ENCODE measurements at regions of chr21 and their contacts with region 1.

Region 1: GRCh38 chr21:32757804-32758203 is 13.8 kb downstream of the PAXBP1 start:
- DNase-seq: no peak
- ATAC-seq: no peak
- H3K4me3 ChIP-seq: no peak overlapping the region
- H3K27ac ChIP-seq: no peak overlapping the region
- H3K4me1 ChIP-seq: no peaks in the 10 kb centered on the region
- CTCF ChIP-seq: no peak
- EP300 ChIP-seq: no peak
- POLR2A ChIP-seq: no peak
- RAD21 ChIP-seq: no peak

Region 2: DNA sequence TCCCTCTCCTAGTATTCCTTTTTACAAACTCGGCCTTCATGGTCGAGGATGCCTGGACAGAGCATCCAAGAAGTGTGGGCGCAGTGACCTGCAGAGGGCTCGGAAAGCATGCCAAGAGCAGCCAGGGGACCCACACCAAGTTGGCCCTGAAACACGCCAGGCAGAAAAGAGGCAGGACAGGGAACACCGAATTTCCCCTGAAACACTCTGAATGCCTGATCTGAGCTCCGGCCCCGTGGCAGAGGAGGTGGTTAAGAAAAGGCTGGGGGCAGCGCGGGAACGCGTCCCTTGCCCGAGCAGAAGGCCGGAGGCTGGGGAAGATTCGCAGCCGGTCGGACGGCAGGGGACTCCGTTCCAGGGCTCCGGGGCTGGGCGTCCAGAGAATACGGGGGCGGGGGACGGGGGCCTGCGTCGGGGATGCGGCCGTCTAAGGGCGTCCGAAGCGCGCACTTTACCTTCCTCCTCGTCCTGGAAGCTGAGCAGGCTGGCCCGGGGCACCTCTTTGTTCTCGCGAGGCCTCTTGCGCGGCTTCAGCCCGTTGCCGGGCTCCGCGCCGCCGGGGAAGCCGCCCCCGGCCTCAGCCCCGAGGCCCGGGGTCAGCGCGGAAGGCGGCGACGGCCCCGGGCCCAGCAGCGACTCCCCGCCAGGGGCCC is 13.2 kb after region 1 on chr21:
- CTCF ChIA-PET with region 1: interaction called, 10 read pairs
- POLR2A ChIA-PET with region 1: interaction called, 4 read pairs
- DNase-seq: peak; percentile 20 to 46
- ATAC-seq: peak; percentile 72 to 82
- H3K4me3 ChIP-seq: peak overlapping the region; percentile 91
- H3K27ac ChIP-seq: peak overlapping the region; percentile 93 to 99
- H3K4me1 ChIP-seq: peaks cover 11% of the 10 kb centered on the region; the same call in 2 of the 3 replicates
- CTCF ChIP-seq: no peak
- EP300 ChIP-seq: no peak
- POLR2A ChIP-seq: no peak
- RAD21 ChIP-seq: no peak